Panc1 (cell line): ENCODE measurements at regions of chr1 and their contacts with region 1.

Region 1: GRCh38 chr1:3618881-3619671 is 5.7 kb upstream of the TPRG1L start:
- DNase-seq: peak; percentile 46
- ATAC-seq: peak; percentile 78
- H3K4me3 ChIP-seq: no peak overlapping the region
- H3K27ac ChIP-seq: no peak overlapping the region
- H3K4me1 ChIP-seq: peaks cover 14% of the 10 kb centered on the region
- H3K27me3 ChIP-seq: no peaks in the 10 kb centered on the region
- CTCF ChIP-seq: peak; percentile 93

Region 2: GRCh38 chr1:3453203-3453761 is 165.8 kb before region 1 on chr1:
- CTCF ChIA-PET with region 1: interaction called, 24 read pairs
- POLR2A ChIA-PET with region 1: no interaction called
- in situ Hi-C with region 1: no loop called
- intact Hi-C with region 1: loop called (anchors 2 kb)
- DNase-seq: peak; percentile 32
- ATAC-seq: peak; percentile 79
- H3K4me3 ChIP-seq: no peak overlapping the region
- H3K27ac ChIP-seq: no peak overlapping the region
- H3K4me1 ChIP-seq: peaks cover 9% of the 10 kb centered on the region
- H3K27me3 ChIP-seq: no peaks in the 10 kb centered on the region
- CTCF ChIP-seq: peak; percentile 96

Region 3: GRCh38 chr1:3483801-3484444 is 135.2 kb before region 1 on chr1:
- CTCF ChIA-PET with region 1: no interaction called
- POLR2A ChIA-PET with region 1: no interaction called
- in situ Hi-C with region 1: no loop called
- intact Hi-C with region 1: loop called (anchors 2 kb)
- DNase-seq: peak; percentile 12
- ATAC-seq: peak; percentile 50
- H3K4me3 ChIP-seq: no peak overlapping the region
- H3K27ac ChIP-seq: no peak overlapping the region
- H3K4me1 ChIP-seq: peaks cover 14% of the 10 kb centered on the region
- H3K27me3 ChIP-seq: no peaks in the 10 kb centered on the region
- CTCF ChIP-seq: peak; percentile 96

Region 4: DNA sequence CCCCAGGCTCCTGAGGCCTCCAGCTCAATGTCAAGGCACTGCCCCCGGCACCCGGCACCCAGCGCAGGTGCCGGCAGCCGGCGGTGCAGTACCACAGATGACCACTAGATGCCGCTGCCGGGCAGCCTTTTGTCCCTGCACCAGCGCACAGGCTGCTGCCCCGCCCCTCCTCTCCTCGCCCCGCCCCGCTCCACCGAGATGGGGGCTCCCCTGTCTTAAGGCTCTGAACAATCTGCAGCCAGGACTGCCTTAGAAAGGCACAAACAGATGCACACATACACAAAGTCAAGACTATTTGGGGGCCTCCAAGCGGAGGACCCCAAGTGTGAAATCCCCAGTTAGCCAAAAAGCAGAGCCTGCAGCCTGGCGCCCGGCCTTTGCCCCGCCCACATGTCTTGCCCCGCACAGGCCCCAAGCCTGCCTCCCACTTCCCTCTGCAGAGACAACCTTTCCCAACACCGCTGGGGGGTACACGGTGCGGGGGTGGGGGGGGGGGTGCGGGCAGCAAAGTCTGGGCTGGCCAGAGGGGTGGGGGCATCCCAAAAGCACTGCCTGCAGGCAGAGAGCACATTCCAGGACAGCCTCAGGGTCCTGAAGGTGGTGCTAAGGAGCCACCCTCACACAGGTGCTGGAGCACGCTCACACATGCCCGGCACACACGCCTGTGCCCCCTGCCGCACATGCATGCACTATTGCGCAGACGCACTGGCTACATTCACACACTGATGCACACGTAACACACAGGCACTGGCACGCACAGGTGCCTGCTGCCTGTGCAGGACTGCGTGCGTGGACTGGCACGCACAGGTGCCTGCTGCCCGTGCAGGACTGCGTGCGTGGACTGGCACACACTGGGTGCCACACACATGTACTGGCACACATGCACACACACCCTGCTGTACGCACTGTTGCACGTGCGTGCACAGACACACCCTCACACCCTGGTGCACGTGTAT is 127.5 kb before region 1 on chr1:
- CTCF ChIA-PET with region 1: interaction called, 14 read pairs
- POLR2A ChIA-PET with region 1: no interaction called
- in situ Hi-C with region 1: no loop called
- intact Hi-C with region 1: loop called (anchors 2 kb)
- DNase-seq: peak; percentile 39
- ATAC-seq: peak; percentile 79
- H3K4me3 ChIP-seq: peak overlapping the region in 1 of 2 experiments; percentile 17; a peak in 1 of 4 replicates
- H3K27ac ChIP-seq: no peak overlapping the region
- H3K4me1 ChIP-seq: 0 out of 2 replicates have a peak, but pooled peaks cover 3% of the 10 kb centered on the region
- H3K27me3 ChIP-seq: no peaks in the 10 kb centered on the region
- CTCF ChIP-seq: peak; percentile 98

Region 5: GRCh38 chr1:3564921-3565827 is 53.9 kb before region 1 on chr1:
- CTCF ChIA-PET with region 1: interaction called, 12 read pairs
- POLR2A ChIA-PET with region 1: no interaction called
- in situ Hi-C with region 1: no loop called
- intact Hi-C with region 1: loop called (anchors 1 kb)
- DNase-seq: no peak
- ATAC-seq: peak; percentile 67
- H3K4me3 ChIP-seq: no peak overlapping the region
- H3K27ac ChIP-seq: no peak overlapping the region
- H3K4me1 ChIP-seq: peaks cover 6% of the 10 kb centered on the region
- H3K27me3 ChIP-seq: no peaks in the 10 kb centered on the region
- CTCF ChIP-seq: peak; percentile 98

Region 6: DNA sequence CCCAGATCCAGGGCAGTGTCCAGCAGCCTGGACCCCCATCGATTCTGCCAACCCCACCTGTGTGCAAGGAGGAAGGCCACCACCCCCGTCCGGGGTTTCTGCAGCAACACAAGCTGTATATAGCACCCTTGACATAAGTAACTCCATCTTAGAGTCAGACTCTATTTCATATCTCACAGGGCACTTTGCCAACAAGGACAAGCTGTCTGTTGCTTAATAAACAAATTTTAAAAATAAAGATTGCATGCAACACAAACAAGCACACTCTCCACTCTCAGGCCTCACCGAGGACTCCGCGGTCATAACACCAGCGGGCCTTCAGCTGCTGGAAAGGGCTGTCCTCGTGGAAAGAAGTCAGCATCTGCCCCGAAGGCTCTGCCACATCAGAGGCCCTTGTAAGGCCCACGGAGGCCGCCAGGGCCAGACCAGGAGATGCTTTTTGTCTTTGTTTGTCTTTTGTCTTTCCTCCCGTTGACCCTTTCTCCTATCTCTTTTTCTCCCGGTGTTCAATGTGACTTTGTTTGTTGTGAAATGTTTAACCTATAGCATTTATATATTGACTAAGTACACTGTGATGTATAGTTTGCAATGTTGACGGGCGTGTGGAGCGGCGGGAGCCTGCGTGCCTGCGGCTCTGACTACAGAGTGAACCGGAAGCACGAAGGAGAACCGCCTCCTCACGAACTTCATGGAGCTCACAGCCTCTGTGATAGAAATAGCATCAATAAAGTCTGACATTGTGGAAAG is 32.0 kb before region 1 on chr1:
- CTCF ChIA-PET with region 1: interaction called, 12 read pairs
- POLR2A ChIA-PET with region 1: no interaction called
- in situ Hi-C with region 1: no loop called
- intact Hi-C with region 1: no loop called
- DNase-seq: peak; percentile 51
- ATAC-seq: peak; percentile 95
- H3K4me3 ChIP-seq: no peak overlapping the region
- H3K27ac ChIP-seq: 0 out of 2 replicates have a peak overlapping the region, but pooled peaks have one; percentile 34
- H3K4me1 ChIP-seq: peaks cover 8% of the 10 kb centered on the region
- H3K27me3 ChIP-seq: no peaks in the 10 kb centered on the region
- CTCF ChIP-seq: no peak

Region 7: GRCh38 chr1:3712573-3713535 is 93.8 kb after region 1 on chr1:
- CTCF ChIA-PET with region 1: no interaction called
- POLR2A ChIA-PET with region 1: no interaction called
- in situ Hi-C with region 1: no loop called
- intact Hi-C with region 1: no loop called
- DNase-seq: no peak
- ATAC-seq: no peak
- H3K4me3 ChIP-seq: no peak overlapping the region
- H3K27ac ChIP-seq: no peak overlapping the region
- H3K4me1 ChIP-seq: peaks cover 10% of the 10 kb centered on the region
- H3K27me3 ChIP-seq: no peaks in the 10 kb centered on the region
- CTCF ChIP-seq: no peak

Region 8: DNA sequence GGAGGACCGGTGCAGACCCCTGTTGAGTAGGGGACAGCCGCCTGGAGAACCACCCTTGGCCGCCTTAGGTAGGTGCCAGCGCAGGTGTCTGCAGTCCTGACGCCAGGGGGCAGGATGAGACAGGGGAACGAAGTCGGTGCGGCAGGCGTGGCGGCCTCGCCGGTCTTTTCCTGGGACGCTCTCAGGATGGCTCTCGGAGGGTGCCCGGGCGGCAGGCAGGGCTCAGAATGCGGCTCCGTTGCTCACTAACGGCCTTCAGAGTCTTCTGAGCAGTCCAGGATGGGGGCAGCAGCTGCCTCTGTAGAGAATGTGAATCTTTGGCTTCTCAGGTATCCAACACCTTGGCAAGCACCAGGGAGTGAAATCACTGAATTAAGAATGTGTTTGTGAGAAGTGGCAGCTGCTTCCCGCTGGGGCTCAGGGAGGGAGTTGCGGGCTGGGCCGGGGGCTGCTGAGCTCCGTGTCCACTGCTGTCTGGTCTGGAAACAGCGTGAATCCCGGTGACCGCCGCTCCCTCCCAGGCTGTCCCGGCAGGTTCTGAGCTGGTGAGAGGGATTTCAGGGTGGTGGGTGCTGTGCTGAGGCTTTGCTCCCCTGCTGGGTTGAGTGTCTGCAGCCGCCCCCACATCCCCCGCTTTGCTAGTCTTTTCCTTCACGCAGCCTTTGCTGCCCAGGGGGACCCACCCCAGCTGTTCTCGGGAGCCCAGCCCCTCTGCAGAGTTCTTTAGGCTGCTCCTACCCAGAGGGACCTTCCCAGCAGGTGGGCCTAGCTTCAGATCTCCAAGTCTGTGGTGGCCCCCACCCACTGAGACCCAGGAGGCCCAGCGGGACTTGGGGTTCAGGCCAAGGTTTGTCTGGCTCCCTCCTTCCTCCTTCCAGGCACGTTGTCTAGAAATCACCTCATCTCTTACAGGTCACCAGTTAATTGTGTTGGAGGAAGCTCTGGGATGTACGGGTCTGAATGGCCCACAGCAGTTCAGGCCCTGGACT is 292.1 kb after region 1 on chr1:
- CTCF ChIA-PET with region 1: no interaction called
- POLR2A ChIA-PET with region 1: no interaction called
- in situ Hi-C with region 1: no loop called
- intact Hi-C with region 1: no loop called
- DNase-seq: no peak
- ATAC-seq: peak; percentile 91
- H3K4me3 ChIP-seq: peak overlapping the region in 1 of 2 experiments; percentile 16; a peak in 1 of 4 replicates
- H3K27ac ChIP-seq: no peak overlapping the region
- H3K4me1 ChIP-seq: peaks cover 6% of the 10 kb centered on the region; the same call in 1 of the 2 replicates
- H3K27me3 ChIP-seq: no peaks in the 10 kb centered on the region
- CTCF ChIP-seq: peak; percentile 91